ENCODE measurements at regions of chr17 and their contacts with region 1.

Region 1: GRCh38 chr17:59753522-59754467 is 46.3 kb downstream of the VMP1 start:
- DNase-seq: no peak
- ATAC-seq: peak; percentile 96
- H3K4me3 Mint-ChIP-seq: no peak overlapping the region
- H3K27ac Mint-ChIP-seq: peak overlapping the region; percentile 65
- H3K4me1 Mint-ChIP-seq: peaks cover 18% of the 10 kb centered on the region
- H3K27me3 Mint-ChIP-seq: no peaks in the 10 kb centered on the region
- CTCF ChIP-seq: peak; percentile 20

Region 2: DNA sequence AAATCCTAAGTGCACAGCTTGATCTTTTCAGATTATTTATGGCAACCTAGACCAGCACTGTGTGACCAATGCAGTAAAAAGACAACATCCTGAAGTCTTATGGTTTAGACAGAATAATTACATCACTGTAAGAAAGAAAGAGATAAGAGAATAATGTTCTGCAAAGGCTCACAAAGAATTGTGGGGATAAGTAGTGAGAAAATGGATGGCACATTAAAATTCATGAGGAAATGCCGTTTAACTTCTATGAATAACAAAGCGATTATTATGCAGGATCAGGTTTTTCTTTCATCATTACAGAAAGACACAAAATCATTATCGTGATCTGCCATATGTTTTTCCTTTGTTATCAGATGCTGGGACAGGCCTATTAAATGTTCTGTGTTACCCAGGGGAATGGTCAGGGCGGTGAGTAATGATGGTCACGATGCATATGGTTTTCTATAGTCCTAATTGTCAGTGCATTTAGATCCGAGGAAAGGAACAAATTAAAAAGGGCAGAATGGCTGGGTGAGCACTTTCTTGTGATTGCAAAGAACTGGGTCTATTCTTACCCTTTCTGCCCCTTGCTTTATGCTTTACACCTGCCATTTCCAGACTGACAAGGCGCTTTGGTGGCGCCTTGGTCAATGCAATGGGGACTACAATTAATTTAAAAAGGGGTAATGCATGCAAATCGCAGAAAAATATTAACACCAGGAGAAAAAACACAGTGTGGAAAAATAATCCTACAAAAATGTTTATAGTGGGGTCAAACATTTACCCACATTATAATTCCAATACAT is 206.5 kb before region 1 on chr17:
- CTCF ChIA-PET with region 1: no interaction called
- POLR2A ChIA-PET with region 1: no interaction called
- intact Hi-C with region 1: no loop called
- DNase-seq: no peak
- ATAC-seq: no peak
- H3K4me3 Mint-ChIP-seq: no peak overlapping the region
- H3K27ac Mint-ChIP-seq: no peak overlapping the region
- H3K4me1 Mint-ChIP-seq: no peaks in the 10 kb centered on the region
- H3K27me3 Mint-ChIP-seq: peaks cover 1% of the 10 kb centered on the region
- CTCF ChIP-seq: no peak

Region 3: GRCh38 chr17:59796785-59797205 is 43.0 kb after region 1 on chr17:
- CTCF ChIA-PET with region 1: no interaction called
- POLR2A ChIA-PET with region 1: no interaction called
- intact Hi-C with region 1: no loop called
- DNase-seq: no peak
- ATAC-seq: no peak
- H3K4me3 Mint-ChIP-seq: no peak overlapping the region
- H3K27ac Mint-ChIP-seq: no peak overlapping the region
- H3K4me1 Mint-ChIP-seq: peaks cover under 1% of the 10 kb centered on the region
- H3K27me3 Mint-ChIP-seq: no peaks in the 10 kb centered on the region
- CTCF ChIP-seq: no peak

Region 4: GRCh38 chr17:59837308-59838051 is 83.7 kb after region 1 on chr17:
- CTCF ChIA-PET with region 1: interaction called, 37 read pairs
- POLR2A ChIA-PET with region 1: interaction called, 137 read pairs
- intact Hi-C with region 1: loop called (anchors 1 kb)
- DNase-seq: no peak
- ATAC-seq: peak; percentile 87
- H3K4me3 Mint-ChIP-seq: peak overlapping the region; percentile 96
- H3K27ac Mint-ChIP-seq: peak overlapping the region; percentile 97
- H3K4me1 Mint-ChIP-seq: peaks cover 60% of the 10 kb centered on the region
- H3K27me3 Mint-ChIP-seq: no peaks in the 10 kb centered on the region
- CTCF ChIP-seq: no peak

Region 5: DNA sequence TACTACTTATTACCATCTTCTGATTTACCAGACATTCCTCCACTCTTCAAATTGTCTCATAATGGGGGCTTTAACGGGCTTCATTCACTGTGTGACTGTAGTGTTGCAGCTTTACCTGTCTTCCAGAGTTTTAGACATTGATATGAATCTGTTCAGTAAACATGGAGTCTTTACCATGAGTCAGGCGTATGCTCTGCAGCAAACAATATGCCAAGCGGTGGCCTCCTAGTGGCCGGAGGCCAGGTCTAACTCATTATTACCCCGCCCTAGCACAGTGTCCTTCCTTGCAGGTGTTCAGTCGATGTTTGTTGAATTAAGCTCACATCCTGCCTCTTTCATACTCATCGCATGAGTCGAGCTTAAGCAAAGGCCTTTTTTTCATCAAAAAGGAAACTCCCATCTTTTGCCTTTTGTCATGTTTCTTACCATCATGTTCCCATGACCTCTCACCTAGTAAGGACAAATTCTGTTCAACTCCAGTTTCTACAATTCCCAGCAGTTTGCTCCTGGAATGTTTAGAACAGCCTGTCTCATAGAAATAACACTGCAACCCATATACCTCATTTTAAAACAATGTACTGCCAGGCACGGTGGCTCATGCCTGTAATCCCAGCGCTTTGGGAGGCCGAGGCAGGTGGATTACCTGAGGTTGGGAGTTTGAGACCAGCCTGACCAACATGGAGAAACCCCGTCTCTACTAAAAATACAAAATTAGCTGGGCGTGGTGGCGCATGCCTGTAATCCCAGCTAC is 99.5 kb after region 1 on chr17:
- CTCF ChIA-PET with region 1: interaction called, 53 read pairs
- POLR2A ChIA-PET with region 1: interaction called, 21 read pairs
- intact Hi-C with region 1: no loop called
- DNase-seq: no peak
- ATAC-seq: peak; percentile 78
- H3K4me3 Mint-ChIP-seq: no peak overlapping the region
- H3K27ac Mint-ChIP-seq: peak overlapping the region; percentile 78
- H3K4me1 Mint-ChIP-seq: peaks cover 25% of the 10 kb centered on the region
- H3K27me3 Mint-ChIP-seq: no peaks in the 10 kb centered on the region
- CTCF ChIP-seq: no peak

Region 6: DNA sequence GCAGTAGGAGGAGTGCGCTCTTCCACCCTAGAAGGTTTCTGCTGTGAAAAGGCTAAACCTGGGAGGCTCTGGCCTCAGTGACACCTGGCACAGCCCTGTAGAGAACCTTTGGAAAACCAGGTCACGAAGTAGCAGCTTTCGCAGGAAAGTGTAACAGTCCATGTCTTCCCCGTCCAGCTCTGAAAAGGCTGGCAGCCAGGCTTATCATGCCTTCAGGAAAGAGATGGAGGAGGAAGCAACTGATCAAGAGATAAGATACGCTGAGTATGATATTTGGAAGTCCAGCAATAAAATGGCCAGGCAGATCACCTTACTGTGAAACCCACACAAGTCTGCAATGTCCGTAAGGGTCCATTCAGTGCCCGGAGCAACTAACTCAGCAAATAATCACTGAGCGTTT is 116.7 kb after region 1 on chr17:
- CTCF ChIA-PET with region 1: no interaction called
- POLR2A ChIA-PET with region 1: no interaction called
- intact Hi-C with region 1: no loop called
- DNase-seq: no peak
- ATAC-seq: no peak
- H3K4me3 Mint-ChIP-seq: no peak overlapping the region
- H3K27ac Mint-ChIP-seq: no peak overlapping the region
- H3K4me1 Mint-ChIP-seq: no peaks in the 10 kb centered on the region
- H3K27me3 Mint-ChIP-seq: no peaks in the 10 kb centered on the region
- CTCF ChIP-seq: no peak

Region 7: DNA sequence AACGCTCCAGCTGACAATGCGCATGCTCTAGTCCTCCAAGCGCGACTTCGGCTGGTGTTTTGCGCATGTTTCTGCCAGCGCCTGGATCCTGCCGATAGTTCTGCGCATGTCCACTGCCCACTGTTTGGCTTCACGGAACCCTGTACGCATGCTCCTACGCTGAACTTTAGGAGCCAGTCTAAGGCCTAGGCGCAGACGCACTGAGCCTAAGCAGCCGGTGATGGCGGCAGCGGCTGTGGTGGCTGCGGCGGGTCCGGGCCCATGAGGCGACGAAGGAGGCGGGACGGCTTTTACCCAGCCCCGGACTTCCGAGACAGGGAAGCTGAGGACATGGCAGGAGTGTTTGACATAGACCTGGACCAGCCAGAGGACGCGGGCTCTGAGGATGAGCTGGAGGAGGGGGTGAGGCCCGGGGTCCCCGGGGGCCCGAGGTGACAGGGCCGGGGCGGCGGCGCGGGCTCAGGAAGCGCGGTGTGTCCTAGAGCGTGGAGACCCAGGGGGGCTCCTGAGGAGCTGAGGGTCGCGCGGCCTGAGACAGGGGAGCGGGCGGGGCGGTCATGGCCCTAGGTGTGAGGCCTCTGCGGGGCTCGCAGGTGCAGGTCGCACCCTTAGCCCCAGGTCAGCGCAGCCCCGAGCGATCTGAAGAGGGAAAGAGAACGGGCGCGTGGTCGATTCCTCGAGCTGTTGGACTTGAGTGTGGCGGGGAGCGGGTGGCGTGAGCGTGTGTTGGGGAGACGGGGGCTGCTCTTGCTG is 139.3 kb after region 1 on chr17 and contains the starts of genes RPS6KB1 and TUBD1:
- CTCF ChIA-PET with region 1: interaction called, 4 read pairs
- POLR2A ChIA-PET with region 1: interaction called, 6 read pairs
- intact Hi-C with region 1: loop called (anchors 1 kb)
- DNase-seq: peak; percentile 86
- ATAC-seq: peak; percentile 91
- H3K4me3 Mint-ChIP-seq: peak within 1 kb of the TSS; percentile 99
- H3K27ac Mint-ChIP-seq: peak within 1 kb of the TSS; percentile 98
- H3K4me1 Mint-ChIP-seq: peaks cover 44% of the 10 kb centered on the region
- H3K27me3 Mint-ChIP-seq: no peaks in the 10 kb centered on the region
- CTCF ChIP-seq: no peak
- total RNA-seq, gene RPS6KB1: 57.7 and 63.0 TPM in 2 replicates
- total RNA-seq, gene TUBD1: 10.5 and 15.1 TPM in 2 replicates

Region 8: DNA sequence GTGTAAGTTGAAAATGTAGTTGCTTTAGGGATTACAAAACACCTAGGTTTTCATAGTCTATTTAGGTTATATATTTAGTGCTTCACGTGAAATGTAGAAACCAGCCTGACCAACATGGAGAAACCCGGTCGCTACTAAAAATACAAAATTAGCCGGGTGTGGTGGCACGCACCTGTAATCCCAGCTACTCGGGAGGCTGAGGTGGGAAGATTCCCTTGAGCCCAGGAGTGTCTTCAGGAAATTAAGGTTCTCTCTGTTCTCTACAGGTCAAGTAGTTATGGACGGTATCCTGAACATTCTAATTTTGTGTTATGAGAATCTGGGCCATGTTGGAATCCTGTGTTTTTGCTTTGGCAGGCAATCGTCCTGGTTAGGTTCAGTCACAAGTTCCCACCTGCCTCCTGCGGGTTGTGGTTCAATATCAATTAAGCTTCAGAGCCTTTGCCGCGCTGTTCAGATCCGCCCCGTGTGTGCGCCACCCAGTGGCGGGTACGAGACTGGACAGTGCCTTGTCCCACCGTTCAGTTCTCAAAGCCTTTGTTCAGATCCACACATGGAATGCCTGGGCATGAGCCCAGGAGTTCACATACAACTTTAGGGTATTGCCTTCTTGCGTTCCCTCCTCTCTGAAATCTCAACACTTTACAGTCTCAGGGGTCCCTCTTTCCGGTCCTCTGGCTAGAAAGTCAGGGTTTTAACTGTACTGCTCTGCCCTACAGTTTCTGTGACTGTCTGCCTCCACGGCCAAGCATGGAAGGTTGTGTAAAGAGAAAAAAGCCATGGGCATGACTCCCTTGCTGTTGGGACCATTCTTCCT is 283.2 kb after region 1 on chr17:
- CTCF ChIA-PET with region 1: no interaction called
- POLR2A ChIA-PET with region 1: no interaction called
- intact Hi-C with region 1: loop called (anchors 2 kb)
- DNase-seq: peak; percentile 56
- ATAC-seq: peak; percentile 94
- H3K4me3 Mint-ChIP-seq: no peak overlapping the region
- H3K27ac Mint-ChIP-seq: no peak overlapping the region
- H3K4me1 Mint-ChIP-seq: peaks cover 4% of the 10 kb centered on the region
- H3K27me3 Mint-ChIP-seq: peaks cover 11% of the 10 kb centered on the region
- CTCF ChIP-seq: no peak

Measured in activated B cell treated with CpG ODN at 0.5 μM for 24 hours (primary cell).